ENCODE measurements at regions of chr20 and their contacts with region 1.

Region 1: DNA sequence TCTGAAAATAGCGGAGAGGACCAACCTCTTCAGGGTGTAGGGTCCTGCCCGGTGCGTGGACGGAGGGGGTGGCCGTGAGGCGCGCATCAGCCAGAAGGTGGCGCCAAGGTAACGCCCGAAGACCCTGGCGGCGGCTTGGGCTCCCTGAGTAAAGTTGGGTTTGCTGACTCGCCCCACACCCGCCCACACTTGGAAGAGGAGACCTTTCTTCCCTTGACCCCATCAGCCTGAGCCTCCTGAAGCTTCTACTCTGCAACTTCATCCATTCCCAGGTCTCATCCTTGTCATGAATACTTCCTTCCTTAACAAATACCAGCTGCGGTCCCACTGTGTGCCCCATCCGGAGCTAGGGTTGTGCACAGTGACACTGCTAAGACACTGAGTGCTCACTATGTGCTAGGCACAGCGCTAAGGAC is 14.6 kb downstream of the CD40 start:
- DNase-seq: peak; percentile 83
- H3K4me3 ChIP-seq: no peak overlapping the region
- H3K27ac ChIP-seq: no peak overlapping the region
- H3K4me1 ChIP-seq: peaks cover 9% of the 10 kb centered on the region
- H3K27me3 ChIP-seq: no peaks in the 10 kb centered on the region
- CTCF ChIP-seq: peak; percentile 62 to 88 (median 74)
- POLR2A ChIP-seq: no peak

Region 2: DNA sequence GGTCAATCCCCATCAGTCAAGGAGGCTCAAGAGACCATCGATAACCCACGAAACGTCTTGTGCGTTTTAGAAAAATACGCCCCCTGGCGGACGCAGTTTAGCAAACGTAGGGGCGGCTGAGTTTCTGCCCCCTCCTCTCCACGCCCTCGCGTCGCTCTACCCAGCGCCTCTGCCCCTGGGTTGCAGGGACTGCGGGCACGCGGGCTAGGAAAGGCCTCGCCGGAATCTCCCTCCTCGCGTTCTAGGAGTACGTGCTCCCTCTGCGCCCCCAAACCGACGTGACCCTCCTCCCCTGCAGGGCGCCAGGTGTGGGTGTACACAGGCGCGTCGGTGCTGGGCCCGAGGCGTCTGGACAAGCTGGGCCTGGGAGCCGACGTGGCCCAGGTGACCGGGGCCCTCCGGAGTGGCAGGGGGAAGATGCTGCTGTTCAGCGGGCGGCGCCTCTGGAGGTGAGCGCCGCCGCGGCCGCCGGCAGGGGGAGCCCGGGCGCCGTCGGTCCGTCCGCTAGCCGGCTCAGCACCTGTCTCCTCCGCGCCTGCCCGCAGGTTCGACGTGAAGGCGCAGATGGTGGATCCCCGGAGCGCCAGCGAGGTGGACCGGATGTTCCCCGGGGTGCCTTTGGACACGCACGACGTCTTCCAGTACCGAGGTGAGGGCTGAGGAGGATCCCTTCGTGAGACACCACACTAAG is 118.7 kb before region 1 on chr20:
- intact Hi-C with region 1: no loop called
- DNase-seq: peak; percentile 70
- H3K4me3 ChIP-seq: peak overlapping the region; percentile 31 to 47
- H3K27ac ChIP-seq: no peak overlapping the region
- H3K4me1 ChIP-seq: peaks cover 5% of the 10 kb centered on the region
- H3K27me3 ChIP-seq: peaks cover 6% of the 10 kb centered on the region
- CTCF ChIP-seq: peak; percentile 46 to 80 (median 60)
- POLR2A ChIP-seq: no peak

Region 3: GRCh38 chr20:46307139-46307998 is 174.7 kb after region 1 on chr20:
- intact Hi-C with region 1: loop called (anchors 10 kb)
- DNase-seq: peak; percentile 48
- H3K4me3 ChIP-seq: peak overlapping the region; percentile 43 to 53
- H3K27ac ChIP-seq: no peak overlapping the region
- H3K4me1 ChIP-seq: peaks cover under 1% of the 10 kb centered on the region
- H3K27me3 ChIP-seq: no peaks in the 10 kb centered on the region
- CTCF ChIP-seq: peak; percentile 62 to 67 (median 63)
- POLR2A ChIP-seq: no peak

Region 4: GRCh38 chr20:46349035-46349741 is 216.5 kb after region 1 on chr20:
- intact Hi-C with region 1: loop called (anchors 10 kb)
- DNase-seq: peak; percentile 75
- H3K4me3 ChIP-seq: no peak overlapping the region
- H3K27ac ChIP-seq: peak overlapping the region; percentile 49 to 76
- H3K4me1 ChIP-seq: peaks cover 26% of the 10 kb centered on the region
- H3K27me3 ChIP-seq: no peaks in the 10 kb centered on the region
- CTCF ChIP-seq: peak; percentile 66 to 79 (median 70)
- POLR2A ChIP-seq: no peak

Region 5: GRCh38 chr20:46438156-46438750 is 305.5 kb after region 1 on chr20:
- intact Hi-C with region 1: loop called (anchors 10 kb)
- DNase-seq: peak; percentile 51
- H3K4me3 ChIP-seq: no peak overlapping the region
- H3K27ac ChIP-seq: no peak overlapping the region
- H3K4me1 ChIP-seq: no peaks in the 10 kb centered on the region
- H3K27me3 ChIP-seq: no peaks in the 10 kb centered on the region
- CTCF ChIP-seq: peak in 2 of 3 experiments; percentile 24 to 30
- POLR2A ChIP-seq: no peak

Region 6: GRCh38 chr20:47568001-47568407 is 1435.3 kb after region 1 on chr20:
- intact Hi-C with region 1: no loop called
- DNase-seq: no peak
- H3K4me3 ChIP-seq: no peak overlapping the region
- H3K27ac ChIP-seq: peak overlapping the region in 1 of 2 donors; percentile 36
- H3K4me1 ChIP-seq: peaks cover 5% of the 10 kb centered on the region
- H3K27me3 ChIP-seq: no peaks in the 10 kb centered on the region
- CTCF ChIP-seq: no peak
- POLR2A ChIP-seq: no peak